CD8-positive, alpha-beta T cell (primary cell): ENCODE measurements at regions of chr5 and their contacts with region 1.

Region 1: DNA sequence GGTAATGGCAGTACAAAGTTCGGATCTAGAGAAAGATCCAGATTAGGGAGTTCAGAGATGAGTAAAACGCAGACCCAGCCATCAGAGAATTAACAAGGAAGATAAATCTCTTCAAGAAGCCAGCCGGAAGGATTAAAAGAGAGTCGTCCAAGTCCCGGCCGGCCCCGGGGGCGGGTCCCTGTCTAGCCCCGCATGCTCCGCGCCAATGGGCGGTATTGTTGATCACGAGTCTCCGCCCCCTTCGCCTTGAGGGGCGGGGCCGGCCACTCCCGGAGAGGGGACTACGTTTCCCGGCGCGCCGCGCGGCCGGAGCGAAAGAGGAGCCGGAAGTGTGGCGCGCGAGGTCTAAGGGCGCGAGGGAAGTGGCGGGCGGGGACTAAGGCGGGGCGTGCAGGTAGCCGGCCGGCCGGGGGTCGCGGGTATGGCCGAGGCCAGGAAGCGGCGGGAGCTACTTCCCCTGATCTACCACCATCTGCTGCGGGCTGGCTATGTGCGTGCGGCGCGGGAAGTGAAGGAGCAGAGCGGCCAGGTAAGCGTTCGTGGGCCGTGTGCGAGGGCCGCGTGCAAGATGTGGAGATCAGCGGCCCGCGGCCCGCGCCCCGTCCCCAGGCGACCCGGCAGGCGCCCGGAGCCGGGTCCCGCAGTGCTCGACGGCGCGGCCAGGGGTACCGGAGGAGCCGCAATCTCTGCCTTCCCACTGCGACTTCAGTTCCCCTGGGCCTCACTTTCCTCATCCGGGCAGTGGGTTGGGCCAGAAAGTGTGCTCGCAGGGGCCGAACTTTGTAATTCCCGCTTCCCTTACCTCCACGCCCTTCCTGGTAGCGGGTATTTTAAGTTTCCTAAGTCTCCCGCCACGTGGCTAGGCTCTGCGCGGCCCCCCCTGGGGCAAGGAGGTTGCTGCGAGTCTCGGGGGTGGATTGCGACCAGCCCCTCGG is at the start of gene TCOF1:
- DNase-seq: peak; percentile 93 to 99 (median 97)
- ATAC-seq: peak; percentile 99
- H3K4me3 ChIP-seq: peak within 1 kb of the TSS; percentile 62 to 74
- H3K4me3 Mint-ChIP-seq: peak within 1 kb of the TSS; percentile 82
- H3K27ac ChIP-seq: peak within 1 kb of the TSS; percentile 52 to 70
- H3K27ac Mint-ChIP-seq: peak within 1 kb of the TSS; percentile 87
- H3K4me1 ChIP-seq: peaks cover 18% of the 10 kb centered on the region
- H3K4me1 Mint-ChIP-seq: peaks cover 46% of the 10 kb centered on the region
- H3K27me3 ChIP-seq: no peaks in the 10 kb centered on the region
- H3K27me3 Mint-ChIP-seq: no peaks in the 10 kb centered on the region
- CTCF ChIP-seq: no peak
- total RNA-seq, gene TCOF1: 36.5 to 38.7 TPM

Region 2: DNA sequence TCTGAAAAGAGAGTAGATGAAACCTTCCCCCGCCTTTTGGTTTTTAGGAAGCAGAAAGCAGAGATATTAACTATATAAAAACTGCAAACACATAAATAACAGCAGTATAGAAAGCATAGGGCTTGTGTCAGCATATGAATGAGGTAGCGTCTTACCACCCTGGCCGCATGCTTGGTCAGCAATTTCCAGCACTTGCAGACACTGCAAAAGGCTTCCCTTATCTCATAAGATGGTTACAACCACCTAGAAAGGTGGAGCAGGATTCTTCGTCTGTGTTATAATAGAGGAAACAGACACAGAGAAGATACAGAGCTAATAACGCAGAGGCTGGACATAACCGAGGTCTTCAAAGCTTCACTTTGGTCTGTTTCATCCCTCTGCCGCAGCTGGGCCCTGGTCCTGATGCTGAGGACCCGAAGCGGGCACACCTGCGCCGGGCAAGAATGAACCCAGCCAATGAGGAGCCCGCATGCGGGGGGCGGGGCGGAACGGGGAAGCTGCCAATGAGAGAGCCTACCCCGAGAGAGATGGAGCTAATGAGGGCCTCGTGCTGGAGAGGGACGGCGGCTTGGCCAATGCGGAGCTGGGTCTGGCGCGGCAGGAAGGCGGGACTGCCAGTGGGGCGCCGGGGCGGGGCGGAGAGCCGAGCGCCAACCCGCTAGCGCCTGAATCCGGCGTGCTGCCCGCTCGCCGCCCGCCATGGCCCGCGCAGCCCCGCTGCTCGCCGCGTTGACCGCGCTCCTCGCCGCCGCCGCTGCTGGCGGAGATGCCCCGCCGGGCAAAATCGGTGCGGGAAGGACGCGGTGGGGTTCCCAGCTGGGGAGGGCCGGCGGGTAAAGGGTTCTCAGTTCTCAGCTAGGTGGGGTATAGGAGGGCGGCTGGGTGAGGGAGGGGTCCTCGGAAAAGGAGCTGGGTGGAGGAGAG is 1000.0 kb before region 1 on chr5 and contains the start of gene PCYOX1L:
- CTCF ChIA-PET with region 1: no interaction called
- POLR2A ChIA-PET with region 1: no interaction called
- intact Hi-C with region 1: loop called in 1 of 2 experiments (anchors 5 kb)
- DNase-seq: peak; percentile 89 to 99 (median 95)
- ATAC-seq: peak; percentile 96
- H3K4me3 ChIP-seq: peak within 1 kb of the TSS; percentile 83 to 88
- H3K4me3 Mint-ChIP-seq: peak within 1 kb of the TSS; percentile 93
- H3K27ac ChIP-seq: peak within 1 kb of the TSS; percentile 63 to 74
- H3K27ac Mint-ChIP-seq: peak within 1 kb of the TSS; percentile 92
- H3K4me1 ChIP-seq: peaks cover 37% of the 10 kb centered on the region
- H3K4me1 Mint-ChIP-seq: peaks cover 67% of the 10 kb centered on the region
- H3K27me3 ChIP-seq: no peaks in the 10 kb centered on the region
- H3K27me3 Mint-ChIP-seq: no peaks in the 10 kb centered on the region
- CTCF ChIP-seq: no peak
- total RNA-seq, gene PCYOX1L: 18.9 to 21.9 TPM

Region 3: GRCh38 chr5:150000256-150000989 is 357.2 kb before region 1 on chr5 and contains the starts of genes HMGXB3 and TIGD6:
- CTCF ChIA-PET with region 1: no interaction called
- POLR2A ChIA-PET with region 1: no interaction called
- intact Hi-C with region 1: loop called in 1 of 2 experiments (anchors 1 kb)
- DNase-seq: peak; percentile 67 to 92 (median 83)
- ATAC-seq: peak; percentile 84
- H3K4me3 ChIP-seq: peak within 1 kb of the TSS; percentile 73 to 79
- H3K4me3 Mint-ChIP-seq: peak within 1 kb of the TSS; percentile 89
- H3K27ac ChIP-seq: peak within 1 kb of the TSS; percentile 75 to 80
- H3K27ac Mint-ChIP-seq: peak within 1 kb of the TSS; percentile 91
- H3K4me1 ChIP-seq: peaks cover 22% of the 10 kb centered on the region
- H3K4me1 Mint-ChIP-seq: peaks cover 39% of the 10 kb centered on the region
- H3K27me3 ChIP-seq: no peaks in the 10 kb centered on the region
- H3K27me3 Mint-ChIP-seq: no peaks in the 10 kb centered on the region
- CTCF ChIP-seq: no peak
- total RNA-seq, gene HMGXB3: 27.4 to 29.7 TPM
- total RNA-seq, gene TIGD6: 0.97 to 1.5 TPM

Region 4: GRCh38 chr5:150436141-150436680 is 78.6 kb after region 1 on chr5:
- CTCF ChIA-PET with region 1: interaction called, 9 read pairs
- POLR2A ChIA-PET with region 1: no interaction called
- intact Hi-C with region 1: loop called (anchors 1 kb)
- DNase-seq: peak; percentile 84 to 96 (median 92)
- ATAC-seq: peak; percentile 98
- H3K4me3 ChIP-seq: no peak overlapping the region
- H3K4me3 Mint-ChIP-seq: peak overlapping the region; percentile 50
- H3K27ac ChIP-seq: no peak overlapping the region
- H3K27ac Mint-ChIP-seq: peak overlapping the region; percentile 74
- H3K4me1 ChIP-seq: no peaks in the 10 kb centered on the region
- H3K4me1 Mint-ChIP-seq: peaks cover 7% of the 10 kb centered on the region
- H3K27me3 ChIP-seq: no peaks in the 10 kb centered on the region
- H3K27me3 Mint-ChIP-seq: no peaks in the 10 kb centered on the region
- CTCF ChIP-seq: peak; percentile 74

Region 5: GRCh38 chr5:150700594-150701293 is 343.2 kb after region 1 on chr5 and contains the start of gene RBM22:
- CTCF ChIA-PET with region 1: no interaction called
- POLR2A ChIA-PET with region 1: no interaction called
- intact Hi-C with region 1: loop called (anchors 2 kb)
- DNase-seq: peak; percentile 82 to 96 (median 94)
- ATAC-seq: peak; percentile 90
- H3K4me3 ChIP-seq: peak within 1 kb of the TSS; percentile 80 to 81
- H3K4me3 Mint-ChIP-seq: no peak within 1 kb of the TSS
- H3K27ac ChIP-seq: peak within 1 kb of the TSS; percentile 94 to 97
- H3K27ac Mint-ChIP-seq: no peak within 1 kb of the TSS
- H3K4me1 ChIP-seq: peaks cover 19% of the 10 kb centered on the region
- H3K4me1 Mint-ChIP-seq: peaks cover 2% of the 10 kb centered on the region
- H3K27me3 ChIP-seq: no peaks in the 10 kb centered on the region
- H3K27me3 Mint-ChIP-seq: no peaks in the 10 kb centered on the region
- CTCF ChIP-seq: peak; percentile 85
- total RNA-seq, gene RBM22: 119 to 125 TPM

Region 6: DNA sequence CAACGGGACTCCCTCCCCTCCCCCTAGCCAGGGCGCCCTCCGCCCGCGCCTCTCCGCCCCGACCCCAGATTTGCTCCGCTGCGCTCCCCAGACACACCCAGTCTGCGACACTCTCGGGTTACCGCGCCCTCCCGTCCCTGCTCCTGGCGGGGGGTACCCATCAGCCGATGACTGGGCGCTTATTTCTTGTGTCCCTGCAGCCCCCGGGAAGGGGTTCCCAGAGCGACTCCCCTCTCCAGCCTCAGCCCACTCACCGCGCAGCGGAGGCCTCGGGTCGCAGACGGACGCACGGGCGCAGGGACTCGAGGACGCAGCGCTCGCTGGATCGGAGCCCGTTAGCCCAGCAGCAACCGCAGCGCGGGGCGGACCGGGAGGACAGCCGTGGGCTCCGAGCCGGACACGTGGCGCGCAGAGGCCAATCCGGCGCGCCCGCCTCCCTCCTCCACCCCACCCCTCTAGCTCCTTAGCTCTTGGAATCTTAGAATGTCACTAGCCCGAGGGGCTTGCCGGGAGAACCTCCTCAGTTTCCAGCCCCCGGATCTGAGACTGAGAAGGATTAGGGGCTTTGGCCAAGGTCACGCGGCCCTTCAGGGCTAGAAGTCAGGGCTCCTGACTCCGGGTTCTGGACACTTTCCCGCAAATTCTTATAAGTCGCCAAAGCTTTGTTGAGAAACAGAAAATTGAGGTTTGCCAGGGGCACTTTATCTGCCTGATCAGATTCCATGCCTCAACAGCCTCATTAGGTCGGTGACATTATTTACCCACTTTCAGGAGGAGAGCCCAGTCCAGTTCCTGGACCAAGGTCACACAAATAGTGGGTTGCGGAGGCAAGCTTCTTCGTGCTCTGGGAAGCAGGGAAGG is 800.1 kb after region 1 on chr5 and contains the start of gene ANXA6:
- CTCF ChIA-PET with region 1: no interaction called
- POLR2A ChIA-PET with region 1: no interaction called
- intact Hi-C with region 1: loop called in 1 of 2 experiments (anchors 10 kb)
- DNase-seq: peak in 8 of 9 experiments; percentile 50 to 86 (median 66)
- ATAC-seq: peak; percentile 70
- H3K4me3 ChIP-seq: peak within 1 kb of the TSS; percentile 52 to 94
- H3K4me3 Mint-ChIP-seq: peak within 1 kb of the TSS; percentile 97
- H3K27ac ChIP-seq: peak within 1 kb of the TSS; percentile 68 to 90
- H3K27ac Mint-ChIP-seq: peak within 1 kb of the TSS; percentile 95
- H3K4me1 ChIP-seq: peaks cover 43% of the 10 kb centered on the region
- H3K4me1 Mint-ChIP-seq: peaks cover 65% of the 10 kb centered on the region
- H3K27me3 ChIP-seq: no peaks in the 10 kb centered on the region
- H3K27me3 Mint-ChIP-seq: no peaks in the 10 kb centered on the region
- CTCF ChIP-seq: no peak
- total RNA-seq, gene ANXA6: 83.5 to 89.4 TPM